ENCODE measurements at regions of chr3 and their contacts with region 1.

Region 1: DNA sequence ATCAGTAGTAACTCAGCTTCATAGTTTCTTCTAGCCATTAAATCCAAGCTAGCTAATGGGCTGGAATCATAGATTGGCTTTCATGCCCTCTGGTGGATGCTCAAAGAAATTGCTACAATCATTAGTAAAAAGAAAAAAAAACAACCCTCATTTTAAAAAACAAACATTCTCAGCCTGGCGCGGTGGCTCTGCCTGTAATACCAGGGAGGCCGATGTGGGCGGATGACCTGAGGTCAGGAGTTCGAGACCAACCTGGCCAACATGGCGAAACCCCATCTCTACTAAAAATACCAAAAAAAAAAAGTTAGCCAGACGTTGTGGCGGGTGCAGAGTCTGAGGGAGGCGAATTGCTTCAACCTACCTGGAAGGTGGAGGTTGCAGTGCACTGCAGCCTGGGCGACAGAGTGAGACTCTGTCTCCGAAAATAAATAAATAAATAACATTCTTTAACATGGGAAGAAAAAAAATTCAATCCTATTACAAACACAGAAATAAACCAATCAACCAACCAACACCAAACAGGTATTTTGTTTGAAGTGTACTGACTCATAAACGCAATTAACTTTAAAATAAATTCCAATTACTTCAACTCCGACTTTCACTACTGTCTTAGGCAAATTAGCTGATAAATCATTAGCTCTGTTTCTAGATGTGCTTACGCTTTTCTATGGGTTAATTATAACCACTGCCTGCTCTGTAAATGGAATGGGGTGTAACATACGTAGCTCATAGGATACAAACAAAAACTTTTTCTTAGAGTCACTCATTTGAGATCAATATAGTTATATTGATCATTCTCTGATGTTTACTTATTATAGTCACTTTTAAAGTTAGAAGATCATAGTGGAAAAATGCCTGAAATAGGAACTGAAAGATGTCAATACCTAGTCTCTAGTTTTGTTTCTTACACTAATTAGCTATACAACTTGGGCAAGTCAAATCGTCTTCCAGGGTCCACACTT is 24.9 kb downstream of the TMEM207 start:
- DNase-seq: no peak

Region 2: DNA sequence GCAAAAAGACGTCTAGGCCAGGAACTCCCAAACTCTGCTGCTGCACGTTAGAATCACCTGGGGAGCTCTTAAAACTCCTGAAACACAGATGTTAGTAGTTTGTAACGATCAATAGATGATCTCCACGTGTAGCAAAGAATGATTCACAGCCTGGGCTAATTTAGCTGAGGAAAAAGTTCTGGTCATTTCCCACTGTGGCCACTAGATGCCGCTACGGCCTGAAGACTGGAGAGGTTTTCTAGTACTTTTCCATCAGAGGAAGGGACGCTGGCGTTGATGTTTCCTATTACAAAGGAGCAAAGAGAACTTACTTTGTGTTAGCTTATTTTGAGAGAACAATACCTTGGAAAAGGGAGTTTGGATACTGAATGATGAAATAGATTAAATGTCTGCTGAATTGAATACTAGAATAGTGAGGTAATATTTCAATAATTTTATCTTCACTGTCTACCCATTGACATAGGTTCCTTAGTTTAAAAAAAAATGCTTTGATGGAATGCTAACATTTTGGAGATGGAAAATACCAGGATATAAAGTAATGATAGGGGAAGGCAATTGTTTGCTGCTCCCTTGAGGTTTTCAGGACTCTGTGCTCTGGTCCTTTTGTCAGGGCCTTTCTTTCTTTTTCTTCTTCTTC is 463.1 kb before region 1 on chr3:
- intact Hi-C with region 1: loop called (anchors 10 kb)
- DNase-seq: no peak

Region 3: GRCh38 chr3:190644753-190645152 is 220.0 kb after region 1 on chr3:
- intact Hi-C with region 1: no loop called
- DNase-seq: no peak

Measured in cardiac septum (tissue), 1 donor.